Activated CD4-positive, alpha-beta T cell treated with anti-CD3 and anti-CD28 coated beads for 36 hours (primary cell): ENCODE measurements at regions of chr12 and their contacts with region 1.

Region 1: DNA sequence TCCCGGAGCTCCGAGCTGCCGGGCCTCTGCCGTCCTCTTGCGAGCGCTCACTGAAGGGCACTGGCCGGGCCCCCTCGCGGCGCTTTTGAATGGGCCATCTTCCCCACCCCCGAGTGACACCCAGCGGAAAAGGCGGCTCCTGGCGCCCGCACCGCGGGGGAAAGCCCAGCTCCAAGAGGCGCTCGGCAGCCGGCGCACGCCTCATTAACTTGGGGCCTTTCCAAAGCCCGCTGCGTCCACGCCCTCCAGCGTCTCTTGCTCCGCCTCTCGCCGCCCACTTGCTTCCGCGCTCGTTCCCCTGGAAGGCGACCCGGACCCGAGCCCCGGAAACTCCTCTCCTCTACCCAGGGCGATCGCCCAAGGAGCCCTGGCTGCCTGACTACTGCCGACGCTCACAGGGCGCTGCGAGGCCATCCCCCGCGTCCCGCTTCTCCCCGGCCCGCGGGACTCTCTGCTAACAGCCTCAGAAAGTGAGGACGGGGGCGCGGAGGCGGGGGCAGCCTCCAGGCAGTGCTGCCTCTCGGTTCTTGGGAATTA is at the start of gene PHLDA1:
- DNase-seq: peak; percentile 97
- ATAC-seq: peak; percentile 87
- H3K4me3 Mint-ChIP-seq: peak within 1 kb of the TSS; percentile 99
- H3K27ac Mint-ChIP-seq: peak within 1 kb of the TSS; percentile 96
- H3K4me1 Mint-ChIP-seq: peaks cover 37% of the 10 kb centered on the region
- H3K27me3 Mint-ChIP-seq: no peaks in the 10 kb centered on the region
- total RNA-seq, gene PHLDA1: 12.3 to 14.3 TPM

Region 2: DNA sequence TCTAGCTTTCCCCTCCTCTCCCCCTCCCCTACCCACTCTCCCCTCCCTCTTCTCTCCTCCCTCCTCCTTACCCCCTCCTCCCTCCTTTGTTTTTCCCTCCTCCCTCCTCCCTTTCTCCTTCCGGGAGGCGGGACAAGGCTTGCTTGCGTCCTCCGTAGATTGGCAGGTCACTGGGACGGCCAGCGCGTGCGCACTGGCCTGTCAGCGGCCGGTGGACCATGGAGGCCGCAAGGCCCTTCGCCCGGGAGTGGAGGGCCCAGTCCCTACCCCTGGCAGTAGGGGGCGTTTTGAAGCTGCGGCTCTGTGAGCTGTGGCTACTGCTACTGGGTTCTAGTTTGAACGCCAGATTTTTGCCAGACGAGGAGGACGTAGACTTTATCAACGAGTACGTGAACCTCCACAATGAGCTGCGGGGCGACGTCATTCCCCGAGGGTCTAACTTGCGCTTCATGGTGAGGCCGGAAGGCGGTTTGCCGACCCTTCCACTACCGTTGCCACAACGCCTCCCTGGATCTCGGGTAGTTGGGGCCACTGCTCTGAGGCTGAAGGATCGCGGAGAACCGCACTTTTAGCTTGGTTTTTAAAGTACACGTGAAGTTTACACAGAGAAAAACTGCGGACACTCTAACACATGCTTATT is 640.6 kb before region 1 on chr12 and contains the start of gene GLIPR1L2:
- CTCF ChIA-PET with region 1: no interaction called
- POLR2A ChIA-PET with region 1: no interaction called
- intact Hi-C with region 1: loop called (anchors 1 to 5 kb)
- DNase-seq: peak; percentile 95
- ATAC-seq: peak; percentile 97
- H3K4me3 Mint-ChIP-seq: peak within 1 kb of the TSS; percentile 93
- H3K27ac Mint-ChIP-seq: peak within 1 kb of the TSS; percentile 97
- H3K4me1 Mint-ChIP-seq: peaks cover 49% of the 10 kb centered on the region
- H3K27me3 Mint-ChIP-seq: no peaks in the 10 kb centered on the region
- total RNA-seq, gene GLIPR1L2: 0.39 to 0.50 TPM

Region 3: DNA sequence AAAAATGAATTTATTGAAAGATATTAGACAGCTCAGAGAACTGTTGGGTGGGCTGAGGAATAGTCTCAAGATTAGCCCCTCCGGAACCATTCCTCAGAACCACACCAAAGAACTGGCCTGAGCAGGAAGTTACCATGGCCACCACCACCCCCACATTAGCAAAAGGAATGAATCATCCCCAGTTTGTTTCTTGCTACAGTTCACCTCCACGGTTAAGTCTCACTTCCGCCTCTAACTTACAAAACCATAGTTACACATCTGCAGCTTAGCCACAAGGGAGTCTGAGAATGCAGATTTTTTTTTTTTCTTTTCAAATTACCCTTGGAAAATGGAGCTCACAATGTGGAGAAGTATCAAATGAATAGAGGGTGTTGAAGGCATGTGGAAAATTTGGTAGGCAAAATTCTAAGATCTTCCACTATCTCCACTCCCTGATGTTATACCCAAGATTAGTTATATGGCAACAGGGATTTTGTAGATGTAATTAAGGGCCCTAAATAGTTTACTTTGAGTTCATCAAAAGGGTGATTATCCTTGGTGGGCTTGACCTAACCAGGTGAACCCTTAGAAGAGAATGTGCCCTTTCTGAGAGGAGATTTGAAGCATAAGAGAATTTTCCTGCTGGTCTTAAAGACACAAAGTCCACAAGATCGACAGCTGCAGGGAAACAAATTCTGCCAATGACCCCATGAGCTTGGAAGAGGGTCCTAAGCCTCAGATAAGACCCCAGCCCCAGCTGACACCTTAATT is 390.4 kb before region 1 on chr12:
- CTCF ChIA-PET with region 1: interaction called, 3 read pairs
- POLR2A ChIA-PET with region 1: no interaction called
- intact Hi-C with region 1: loop called in 1 of 2 experiments (anchors 5 kb)
- DNase-seq: peak; percentile 65
- ATAC-seq: peak; percentile 93
- H3K4me3 Mint-ChIP-seq: no peak overlapping the region
- H3K27ac Mint-ChIP-seq: peak overlapping the region; percentile 34
- H3K4me1 Mint-ChIP-seq: peaks cover 19% of the 10 kb centered on the region
- H3K27me3 Mint-ChIP-seq: peaks cover 11% of the 10 kb centered on the region

Region 4: GRCh38 chr12:75666939-75667334 is 364.7 kb before region 1 on chr12:
- CTCF ChIA-PET with region 1: no interaction called
- POLR2A ChIA-PET with region 1: no interaction called
- intact Hi-C with region 1: no loop called
- DNase-seq: no peak
- ATAC-seq: no peak
- H3K4me3 Mint-ChIP-seq: no peak overlapping the region
- H3K27ac Mint-ChIP-seq: no peak overlapping the region
- H3K4me1 Mint-ChIP-seq: no peaks in the 10 kb centered on the region
- H3K27me3 Mint-ChIP-seq: no peaks in the 10 kb centered on the region

Region 5: GRCh38 chr12:75913502-75914351 is 117.9 kb before region 1 on chr12:
- CTCF ChIA-PET with region 1: interaction called, 4 read pairs
- POLR2A ChIA-PET with region 1: interaction called, 3 read pairs
- intact Hi-C with region 1: loop called in 1 of 2 experiments (anchors 1 kb)
- DNase-seq: peak; percentile 74
- ATAC-seq: peak; percentile 94
- H3K4me3 Mint-ChIP-seq: no peak overlapping the region
- H3K27ac Mint-ChIP-seq: no peak overlapping the region
- H3K4me1 Mint-ChIP-seq: peaks cover 21% of the 10 kb centered on the region
- H3K27me3 Mint-ChIP-seq: peaks cover 1% of the 10 kb centered on the region

Region 6: DNA sequence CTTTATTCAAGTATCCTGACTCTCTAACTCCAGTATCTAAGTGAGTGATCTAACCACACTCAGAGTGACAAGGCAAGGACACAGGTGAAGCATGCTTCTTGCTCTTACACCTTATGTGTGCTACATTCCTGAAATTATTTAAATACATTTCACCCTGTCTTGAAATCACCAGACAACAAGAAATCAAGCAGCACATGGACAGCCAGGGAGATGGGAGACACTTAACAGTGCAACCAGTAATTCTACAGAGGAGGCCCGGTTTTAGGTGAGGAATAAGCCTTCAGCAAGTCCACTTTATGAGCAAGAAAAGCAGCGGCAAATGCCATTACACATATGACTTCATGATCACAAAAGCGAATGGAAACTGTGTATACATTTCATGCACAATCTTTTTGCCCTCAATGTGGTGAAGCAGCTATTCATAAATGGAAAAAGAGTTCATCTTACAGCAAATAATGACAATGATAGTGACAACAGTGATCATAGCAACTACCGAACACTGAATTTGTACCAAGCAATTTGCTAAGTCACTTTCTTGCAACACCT is 37.3 kb before region 1 on chr12:
- CTCF ChIA-PET with region 1: interaction called, 6 read pairs
- POLR2A ChIA-PET with region 1: interaction called, 3 read pairs
- intact Hi-C with region 1: loop called (anchors 1 kb)
- DNase-seq: peak; percentile 53
- ATAC-seq: peak; percentile 86
- H3K4me3 Mint-ChIP-seq: no peak overlapping the region
- H3K27ac Mint-ChIP-seq: peak overlapping the region; percentile 34
- H3K4me1 Mint-ChIP-seq: peaks cover 26% of the 10 kb centered on the region
- H3K27me3 Mint-ChIP-seq: peaks cover 7% of the 10 kb centered on the region

Region 7: GRCh38 chr12:76559400-76560085 is 527.9 kb after region 1 on chr12 and contains the start of gene OSBPL8:
- CTCF ChIA-PET with region 1: no interaction called
- POLR2A ChIA-PET with region 1: no interaction called
- intact Hi-C with region 1: loop called in 1 of 2 experiments (anchors 2 kb)
- DNase-seq: peak; percentile 98
- ATAC-seq: peak; percentile 70
- H3K4me3 Mint-ChIP-seq: peak within 1 kb of the TSS; percentile 86
- H3K27ac Mint-ChIP-seq: peak within 1 kb of the TSS; percentile 98
- H3K4me1 Mint-ChIP-seq: peaks cover 24% of the 10 kb centered on the region
- H3K27me3 Mint-ChIP-seq: no peaks in the 10 kb centered on the region
- total RNA-seq, gene OSBPL8: 70.2 to 78.5 TPM